Activated CD4-positive, alpha-beta memory T cell treated with anti-CD3 and anti-CD28 coated beads for 36 hours (primary cell): ENCODE measurements at regions of chr6 and their contacts with region 1.

Region 1: DNA sequence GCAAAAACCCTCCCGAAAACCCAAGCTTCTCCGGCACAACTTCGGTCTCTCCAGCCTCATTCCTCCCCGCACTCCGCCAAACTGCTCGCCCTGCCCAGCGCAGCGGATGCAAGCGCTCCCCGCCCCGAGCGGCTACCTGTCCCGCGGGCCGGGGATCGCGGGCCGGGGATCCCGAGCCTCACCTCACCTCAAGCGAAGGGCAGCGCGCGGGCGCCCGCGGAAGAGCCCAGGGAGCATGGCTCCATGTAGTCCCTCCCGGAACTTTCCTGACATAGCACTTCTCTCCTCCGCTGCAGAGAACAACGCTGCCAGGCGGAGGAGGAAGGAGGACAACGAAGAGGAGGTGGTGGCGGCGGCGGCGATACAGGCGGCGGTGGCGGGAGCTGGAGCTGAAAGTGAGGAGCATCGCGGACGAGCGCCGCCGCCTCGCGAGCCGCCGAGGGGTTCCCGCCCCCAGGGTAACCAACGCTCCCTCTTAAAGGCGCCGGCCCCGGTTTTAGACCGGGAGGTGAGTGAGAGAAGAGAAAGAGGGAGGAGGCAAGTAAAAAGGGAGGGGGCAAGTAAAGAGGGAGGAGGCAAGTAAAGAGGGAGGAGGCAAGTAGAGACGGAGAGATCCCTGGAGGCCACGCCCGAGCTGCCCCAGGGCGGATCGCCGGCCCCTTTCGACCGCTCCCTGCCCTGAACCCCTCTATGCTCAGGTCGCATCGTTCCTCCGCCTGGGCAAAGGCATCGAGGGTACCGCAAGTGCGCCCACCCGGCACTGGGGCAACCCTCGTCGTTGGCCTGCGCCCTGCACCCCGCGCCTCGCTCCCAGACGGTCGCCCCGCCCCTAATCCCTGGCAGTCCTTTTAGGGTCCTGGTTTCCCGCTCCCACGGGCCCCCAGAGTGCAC is at the start of gene GPR63:
- DNase-seq: peak; percentile 87
- H3K4me3 Mint-ChIP-seq: peak within 1 kb of the TSS; percentile 95
- H3K27ac Mint-ChIP-seq: peak within 1 kb of the TSS; percentile 50
- H3K4me1 Mint-ChIP-seq: peaks cover 17% of the 10 kb centered on the region
- H3K27me3 Mint-ChIP-seq: peaks cover 16% of the 10 kb centered on the region
- total RNA-seq, gene GPR63: 1.5 to 1.7 TPM

Region 2: GRCh38 chr6:96889146-96889545 is 51.8 kb after region 1 on chr6:
- CTCF ChIA-PET with region 1: no interaction called
- POLR2A ChIA-PET with region 1: no interaction called
- intact Hi-C with region 1: loop called (anchors 2 kb)
- DNase-seq: no peak
- H3K4me3 Mint-ChIP-seq: no peak overlapping the region
- H3K27ac Mint-ChIP-seq: no peak overlapping the region
- H3K4me1 Mint-ChIP-seq: peaks cover 13% of the 10 kb centered on the region
- H3K27me3 Mint-ChIP-seq: no peaks in the 10 kb centered on the region

Region 3: GRCh38 chr6:97123112-97123511 is 285.8 kb after region 1 on chr6:
- CTCF ChIA-PET with region 1: no interaction called
- POLR2A ChIA-PET with region 1: no interaction called
- intact Hi-C with region 1: no loop called
- DNase-seq: no peak
- H3K4me3 Mint-ChIP-seq: no peak overlapping the region
- H3K27ac Mint-ChIP-seq: no peak overlapping the region
- H3K4me1 Mint-ChIP-seq: no peaks in the 10 kb centered on the region
- H3K27me3 Mint-ChIP-seq: no peaks in the 10 kb centered on the region

Region 4: DNA sequence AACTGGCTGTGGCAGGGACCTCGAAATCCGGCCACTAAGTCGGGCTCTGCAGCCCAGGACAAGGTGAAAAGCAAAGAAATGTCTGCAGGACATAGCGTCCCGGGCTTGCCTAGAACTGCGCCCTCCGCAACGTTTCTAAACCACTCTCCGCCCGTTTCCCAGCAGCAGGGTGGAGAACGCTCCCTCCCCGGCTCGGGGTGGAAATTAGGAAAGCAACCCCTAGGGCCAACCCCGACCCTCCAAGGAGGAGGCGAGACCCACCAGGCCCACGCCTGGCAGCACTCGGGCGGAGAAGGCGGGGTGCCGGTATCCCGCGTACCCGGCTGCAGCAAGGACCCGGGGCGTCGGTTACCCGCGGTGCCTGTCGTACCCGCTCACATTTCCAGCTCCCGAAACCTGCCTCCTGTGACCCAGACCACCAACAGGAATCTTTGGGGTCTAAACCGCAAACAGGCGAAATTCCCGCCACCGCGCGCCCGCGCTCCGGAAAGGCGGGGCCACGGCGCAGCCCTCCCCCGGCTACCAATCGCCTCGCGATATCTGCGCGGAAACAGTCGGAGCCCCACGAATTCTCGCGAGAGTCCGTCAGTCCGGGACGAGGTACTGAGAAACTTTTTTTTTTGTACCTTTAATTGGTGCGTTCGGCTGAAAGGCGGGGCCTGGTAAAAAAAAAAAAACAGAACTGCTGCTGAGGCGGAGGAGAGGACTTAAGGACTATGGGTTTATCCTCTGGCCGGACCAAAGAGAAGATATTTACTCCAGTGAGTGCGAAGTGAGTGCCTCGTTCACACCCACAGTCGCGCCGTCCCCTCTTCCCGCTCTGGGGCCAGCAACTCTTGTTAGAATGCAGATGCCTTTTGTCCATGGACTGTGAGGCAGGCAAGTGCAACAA is 445.6 kb after region 1 on chr6 and contains the start of gene MMS22L:
- CTCF ChIA-PET with region 1: no interaction called
- POLR2A ChIA-PET with region 1: no interaction called
- intact Hi-C with region 1: loop called (anchors 1 kb)
- DNase-seq: peak; percentile 95
- H3K4me3 Mint-ChIP-seq: peak within 1 kb of the TSS; percentile 91
- H3K27ac Mint-ChIP-seq: peak within 1 kb of the TSS; percentile 69
- H3K4me1 Mint-ChIP-seq: peaks cover 24% of the 10 kb centered on the region
- H3K27me3 Mint-ChIP-seq: no peaks in the 10 kb centered on the region
- total RNA-seq, gene MMS22L: 38.5 to 43.3 TPM